A549 (cell line): ENCODE measurements at regions of chr3 and their contacts with region 1.

Region 1: GRCh38 chr3:128607710-128608048 is 42.9 kb downstream of the RPN1 start:
- DNase-seq: no peak
- ATAC-seq: no peak
- H3K4me3 ChIP-seq: no peak overlapping the region
- H3K27ac ChIP-seq: no peak overlapping the region
- H3K4me1 ChIP-seq: no peaks in the 10 kb centered on the region
- CTCF ChIP-seq: no peak
- EP300 ChIP-seq: no peak
- POLR2A ChIP-seq: no peak
- RAD21 ChIP-seq: no peak

Region 2: GRCh38 chr3:128226795-128227395 is 380.8 kb before region 1 on chr3:
- CTCF ChIA-PET with region 1: interaction called, 10 read pairs
- POLR2A ChIA-PET with region 1: no interaction called
- DNase-seq: peak; percentile 29 to 51
- ATAC-seq: peak; percentile 84 to 99
- H3K4me3 ChIP-seq: no peak overlapping the region
- H3K27ac ChIP-seq: no peak overlapping the region
- H3K4me1 ChIP-seq: no peaks in the 10 kb centered on the region
- CTCF ChIP-seq: peak; percentile 51
- EP300 ChIP-seq: no peak
- POLR2A ChIP-seq: no peak
- RAD21 ChIP-seq: peak; percentile 58 to 63

Region 3: DNA sequence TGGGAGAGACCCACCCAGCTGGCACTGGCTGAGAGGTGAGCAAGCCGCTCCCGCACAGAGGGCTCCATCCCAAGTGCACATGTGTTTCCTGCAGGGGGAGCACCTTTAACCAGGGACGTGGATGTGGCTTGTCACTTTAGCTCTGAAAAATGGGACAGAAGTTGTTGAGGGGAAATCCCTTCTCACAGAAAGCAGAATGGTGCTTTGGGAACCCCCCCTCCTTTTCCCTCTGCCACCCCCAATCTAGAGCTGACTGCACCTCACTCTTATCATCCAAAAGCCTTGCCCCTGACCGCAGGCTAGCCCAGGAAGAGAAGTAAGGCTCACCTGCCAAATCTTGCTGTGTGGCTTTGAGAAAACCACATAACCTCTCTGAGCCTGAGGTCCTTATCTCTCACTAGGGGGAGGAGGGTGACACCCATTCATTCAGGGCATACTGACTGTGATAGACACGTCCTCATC is 35.0 kb before region 1 on chr3:
- CTCF ChIA-PET with region 1: interaction called, 10 read pairs
- POLR2A ChIA-PET with region 1: no interaction called
- DNase-seq: peak; percentile 34 to 79
- ATAC-seq: peak; percentile 87 to 91
- H3K4me3 ChIP-seq: no peak overlapping the region
- H3K27ac ChIP-seq: no peak overlapping the region
- H3K4me1 ChIP-seq: no peaks in the 10 kb centered on the region
- CTCF ChIP-seq: no peak; the same call in 2 of the 3 replicates
- EP300 ChIP-seq: no peak
- POLR2A ChIP-seq: no peak
- RAD21 ChIP-seq: no peak

Region 4: GRCh38 chr3:128590948-128591347 is 16.7 kb before region 1 on chr3:
- CTCF ChIA-PET with region 1: interaction called, 16 read pairs
- POLR2A ChIA-PET with region 1: no interaction called
- DNase-seq: no peak
- ATAC-seq: no peak
- H3K4me3 ChIP-seq: no peak overlapping the region
- H3K27ac ChIP-seq: no peak overlapping the region
- H3K4me1 ChIP-seq: no peaks in the 10 kb centered on the region
- CTCF ChIP-seq: no peak
- EP300 ChIP-seq: no peak
- POLR2A ChIP-seq: no peak
- RAD21 ChIP-seq: no peak